ENCODE measurements at regions of chr1 and their contacts with region 1.

Region 1: DNA sequence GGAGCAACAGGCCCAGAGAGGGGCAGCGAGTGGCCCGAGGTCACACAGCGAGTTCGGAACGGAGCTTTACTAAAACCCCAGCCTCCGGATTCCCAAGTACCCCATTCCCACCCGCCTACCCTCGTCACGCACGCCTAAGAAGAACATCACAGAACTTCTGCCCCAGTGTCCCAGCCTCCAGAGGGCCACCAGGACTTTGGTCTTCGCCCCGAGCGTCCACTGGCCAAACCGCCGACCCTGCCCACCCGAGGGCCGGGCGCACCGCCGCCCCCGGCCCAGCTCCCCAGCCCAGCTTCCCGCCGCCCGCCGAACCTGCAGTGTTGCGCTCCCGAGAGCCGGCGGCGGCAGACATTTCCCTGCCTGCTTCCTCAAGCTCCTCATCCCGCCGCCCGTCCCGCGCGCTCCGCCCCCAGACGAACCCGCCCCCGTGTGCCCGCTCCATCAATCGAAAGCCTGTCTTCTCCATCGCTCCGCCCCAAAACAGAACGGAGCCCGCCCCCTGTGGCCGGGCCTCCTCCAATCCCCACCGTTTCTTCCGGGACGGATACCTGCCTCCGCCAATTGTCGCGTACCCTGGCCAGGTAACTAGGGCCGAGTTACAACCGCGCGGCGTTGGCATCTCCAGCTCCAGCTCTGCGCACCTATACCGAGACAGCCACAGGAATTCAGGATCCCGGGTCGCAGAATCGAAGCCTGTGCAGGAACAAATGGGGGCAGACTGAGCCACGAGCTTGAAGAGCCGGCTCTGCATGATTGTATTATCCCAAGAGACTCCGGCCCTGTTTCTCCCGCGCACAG is 15.3 kb downstream of the INPP5B start:
- DNase-seq: peak; percentile 86 to 97
- H3K4me3 ChIP-seq: peak overlapping the region; percentile 82 to 94
- H3K27ac ChIP-seq: peak overlapping the region; percentile 79 to 83
- H3K4me1 ChIP-seq: peaks cover 0 to 18% of the 10 kb centered on the region in 2 donors
- H3K27me3 ChIP-seq: no peaks in the 10 kb centered on the region
- CTCF ChIP-seq: peak in 1 of 3 experiments; percentile 3

Region 2: DNA sequence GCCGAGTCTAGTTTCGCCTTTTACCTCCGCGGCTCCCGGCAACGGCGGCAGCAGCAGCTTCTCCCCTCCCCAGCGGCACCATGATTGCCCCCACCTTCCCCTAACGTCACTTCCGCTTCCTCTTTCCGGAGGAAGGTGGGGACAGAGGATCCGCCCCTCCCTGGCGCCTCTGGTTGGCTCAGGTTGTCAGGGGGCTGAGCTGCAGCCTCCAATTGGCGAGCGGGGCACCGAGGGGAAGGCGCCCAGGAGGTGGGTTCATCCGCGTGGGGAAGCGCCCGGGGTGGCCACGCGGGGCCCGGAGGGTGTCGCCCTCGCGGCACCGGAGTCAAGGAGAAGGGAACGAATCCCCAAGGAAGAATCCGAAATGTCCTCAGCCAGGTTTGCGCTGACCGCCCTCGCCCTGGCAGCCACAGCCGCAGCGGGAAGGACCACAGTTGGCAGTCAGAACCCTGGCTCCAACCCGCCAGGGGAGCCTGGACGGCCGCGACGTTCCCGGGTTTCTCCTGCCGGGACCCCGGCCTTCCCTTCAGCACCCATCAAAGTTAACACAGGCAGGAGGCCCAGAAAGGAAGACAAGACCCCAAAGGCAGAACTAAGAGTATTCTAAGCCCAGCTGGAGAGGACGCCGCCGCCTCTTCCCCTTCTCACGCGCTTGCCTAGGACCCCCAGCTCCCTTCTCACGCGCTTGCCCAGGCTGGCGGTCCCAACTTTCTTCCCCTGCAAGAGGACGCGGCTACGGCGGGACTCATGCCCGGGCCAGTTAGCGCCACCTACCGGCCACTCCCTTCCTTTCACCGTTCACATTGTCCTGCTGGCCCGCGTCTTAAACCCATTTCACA is 71.8 kb before region 1 on chr1 and contains the start of gene MTF1:
- intact Hi-C with region 1: loop called (anchors 2 kb)
- DNase-seq: peak; percentile 92 to 98
- H3K4me3 ChIP-seq: peak within 1 kb of the TSS; percentile 68 to 80
- H3K27ac ChIP-seq: peak within 1 kb of the TSS; percentile 82 to 87
- H3K4me1 ChIP-seq: peaks cover 6 to 19% of the 10 kb centered on the region in 2 donors
- H3K27me3 ChIP-seq: no peaks in the 10 kb centered on the region
- CTCF ChIP-seq: peak; percentile 66 to 91 (median 81)
- total RNA-seq, gene MTF1: 10.6 TPM

Region 3: DNA sequence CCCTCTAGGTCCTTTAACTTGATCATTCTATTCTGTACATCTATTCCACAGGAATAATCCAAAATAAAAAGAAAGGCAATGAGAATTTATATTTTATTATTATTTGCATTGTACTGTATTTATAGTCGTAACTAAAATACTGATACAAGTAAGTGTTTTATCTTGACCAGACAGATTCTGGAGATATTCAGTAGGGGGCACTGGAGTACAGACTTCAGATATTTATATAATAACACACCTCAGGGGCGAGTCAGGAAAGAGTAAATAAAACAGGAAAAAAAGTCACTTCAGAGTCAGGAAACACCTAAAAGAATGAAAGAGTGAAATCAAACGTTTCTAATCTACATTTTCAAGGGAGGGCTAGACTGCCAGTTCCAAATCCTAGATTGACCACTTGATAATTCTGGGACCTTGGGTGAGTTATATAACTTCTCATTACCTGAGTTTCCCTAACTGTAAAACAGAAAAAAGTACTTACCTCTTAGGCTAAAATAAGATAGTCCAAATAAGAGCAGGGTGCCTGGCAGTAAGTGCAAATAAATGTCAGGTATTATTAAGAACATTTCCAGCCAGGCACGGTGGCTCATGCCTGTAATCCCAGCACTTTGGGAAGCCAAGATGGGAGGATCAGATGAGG is 41.1 kb before region 1 on chr1:
- intact Hi-C with region 1: loop called (anchors 5 kb)
- DNase-seq: no peak
- H3K4me3 ChIP-seq: no peak overlapping the region
- H3K27ac ChIP-seq: peak overlapping the region; percentile 34 to 62
- H3K4me1 ChIP-seq: no peaks in the 10 kb centered on the region
- H3K27me3 ChIP-seq: no peaks in the 10 kb centered on the region
- CTCF ChIP-seq: peak; percentile 41 to 69 (median 51)

Region 4: DNA sequence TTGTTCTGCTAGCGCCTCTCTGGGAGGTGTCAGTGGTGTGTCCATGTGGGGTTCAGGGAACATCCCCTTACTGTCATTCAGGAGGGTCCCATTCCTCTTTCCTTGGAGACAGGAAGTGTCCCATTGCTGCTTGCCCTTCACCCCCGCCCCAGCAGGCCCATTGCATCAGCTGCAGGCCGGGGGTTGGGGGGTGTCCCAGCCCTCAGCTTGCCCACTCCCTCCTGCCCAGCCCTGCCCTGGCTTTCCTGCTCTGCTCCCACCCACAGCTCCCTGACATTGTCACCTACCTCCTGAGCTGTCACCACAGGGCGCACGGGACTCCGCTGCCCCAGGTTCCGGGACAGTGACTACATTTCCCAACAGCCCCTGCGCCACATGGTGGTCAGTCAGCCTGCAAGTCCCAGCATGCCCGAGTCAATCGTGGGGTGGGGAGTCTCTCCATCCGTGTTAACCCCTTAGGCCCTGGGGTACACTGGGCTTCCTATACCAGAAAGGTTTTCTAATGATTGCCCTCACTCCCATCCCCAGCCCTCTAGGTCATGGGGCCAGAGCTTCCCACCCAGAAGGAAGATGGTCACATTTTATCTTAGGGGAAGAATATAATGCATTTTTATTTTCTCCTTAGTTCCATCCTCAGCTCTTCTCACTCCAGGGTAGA is 15.3 kb after region 1 on chr1 and contains the start of gene INPP5B:
- intact Hi-C with region 1: loop called (anchors 2 kb)
- DNase-seq: peak; percentile 79 to 95
- H3K4me3 ChIP-seq: peak within 1 kb of the TSS; percentile 90 to 91
- H3K27ac ChIP-seq: peak within 1 kb of the TSS; percentile 94
- H3K4me1 ChIP-seq: peaks cover 0 to 18% of the 10 kb centered on the region in 2 donors
- H3K27me3 ChIP-seq: no peaks in the 10 kb centered on the region
- CTCF ChIP-seq: peak in 1 of 3 experiments; percentile 13
- total RNA-seq, gene INPP5B: 11.7 TPM

Region 5: DNA sequence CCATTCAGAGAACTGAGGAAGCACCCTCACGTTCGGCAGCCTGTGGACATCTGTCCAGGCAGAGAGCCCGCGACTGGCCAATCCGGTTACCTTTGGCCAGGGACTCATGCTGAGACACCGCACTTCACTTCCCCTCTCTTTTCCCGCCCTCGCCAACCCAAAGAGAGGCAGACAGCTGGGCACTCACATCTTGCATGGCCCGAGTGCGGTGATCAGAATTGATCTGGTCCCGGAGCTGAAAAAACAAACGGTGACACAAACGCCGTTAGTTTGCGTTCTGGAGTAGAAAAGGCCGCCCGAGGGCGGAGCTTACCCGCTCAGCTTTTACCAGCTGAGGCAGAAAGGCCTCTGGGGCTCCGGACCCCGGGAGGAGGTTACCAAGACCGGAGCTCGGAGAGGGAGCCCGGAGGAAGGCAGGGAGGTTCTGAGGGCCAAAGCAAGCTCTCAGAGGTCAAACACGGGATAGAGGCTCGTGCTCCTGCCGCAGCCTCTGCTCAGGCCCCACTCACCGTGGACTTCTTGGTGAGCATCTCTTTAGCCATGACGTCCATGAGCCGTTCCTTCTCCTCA is 57.9 kb after region 1 on chr1:
- intact Hi-C with region 1: loop called (anchors 5 kb)
- DNase-seq: peak in 1 of 2 donors; percentile 68
- H3K4me3 ChIP-seq: peak overlapping the region; percentile 72 to 92
- H3K27ac ChIP-seq: peak overlapping the region; percentile 51 to 76
- H3K4me1 ChIP-seq: peaks cover 7 to 14% of the 10 kb centered on the region in 2 donors
- H3K27me3 ChIP-seq: no peaks in the 10 kb centered on the region
- CTCF ChIP-seq: no peak

Measured in ascending aorta (tissue), 2 donors.